Astrocyte of the cerebellum (primary cell): ENCODE measurements at regions of chr7 and their contacts with region 1.

Region 1: DNA sequence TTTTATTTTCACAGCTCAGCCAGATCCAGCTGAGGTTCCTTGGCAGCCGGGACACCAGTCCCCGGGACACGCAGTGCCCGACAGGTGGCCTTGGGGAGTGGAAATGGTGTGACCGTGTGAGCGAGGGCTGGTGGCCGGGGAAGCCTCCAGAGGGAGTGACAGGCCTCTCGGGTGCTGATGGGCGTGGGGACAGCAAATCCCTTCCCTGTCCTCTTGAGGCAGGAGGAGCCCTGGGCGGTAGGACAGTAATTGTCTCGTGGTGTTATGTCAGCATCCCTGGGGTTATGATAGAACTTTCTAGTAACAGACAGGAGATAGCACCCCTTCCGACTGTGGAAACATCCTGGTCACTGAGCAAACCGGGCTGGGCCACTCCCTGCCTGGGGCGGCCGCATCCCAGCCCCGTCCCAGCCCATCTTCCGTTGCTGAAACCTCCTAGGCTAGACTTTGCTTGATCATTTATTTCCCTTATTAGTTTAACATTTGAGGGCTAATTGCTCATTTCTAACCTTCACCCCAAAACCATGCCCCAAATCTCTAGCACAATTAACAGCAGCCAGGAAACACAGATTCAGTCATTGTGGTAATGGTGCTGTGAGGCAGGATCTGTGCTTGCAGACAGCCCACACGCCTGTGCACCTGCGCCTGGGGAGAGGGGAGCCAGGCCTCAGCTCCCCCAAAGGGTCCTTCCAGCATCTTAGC is 63.3 kb downstream of the ELFN1 start:
- DNase-seq: no peak
- H3K4me3 ChIP-seq: no peak overlapping the region
- CTCF ChIP-seq: no peak

Region 2: DNA sequence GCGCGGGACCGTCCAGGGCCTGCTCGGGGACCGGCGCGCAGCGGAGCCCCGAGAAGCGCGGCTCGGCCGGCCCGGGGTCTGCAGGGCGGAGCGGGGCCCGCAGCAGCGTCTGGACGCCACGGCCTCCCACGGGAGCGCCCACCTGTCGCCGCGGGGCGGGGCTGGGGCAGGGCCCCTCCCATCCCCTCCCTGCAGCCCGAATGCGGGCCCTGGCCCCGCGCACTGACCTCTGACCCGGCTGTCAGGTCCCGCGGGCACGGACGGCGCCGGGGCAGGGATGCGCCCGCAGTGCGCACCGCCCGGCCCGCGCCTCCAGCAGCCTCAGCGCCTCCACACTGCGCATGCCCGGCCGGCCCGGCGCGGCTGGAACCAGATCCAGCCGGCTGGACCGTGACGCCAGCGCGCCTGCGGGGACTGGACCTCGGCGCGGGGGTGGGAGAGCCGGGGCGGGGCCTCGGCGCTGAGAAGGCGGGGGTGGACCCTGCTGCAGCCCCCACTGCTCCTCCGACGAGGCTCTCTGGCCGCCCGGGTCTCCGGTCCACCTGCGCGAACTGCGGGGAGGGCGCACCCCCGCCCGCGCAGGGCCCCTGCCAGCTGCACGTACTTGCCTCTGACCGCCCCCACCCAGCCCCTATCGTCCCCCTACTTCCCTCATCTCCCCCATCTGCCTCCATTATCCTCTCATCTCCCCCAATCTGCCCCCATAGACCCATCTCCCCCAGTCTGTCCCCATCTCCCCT is 705.2 kb before region 1 on chr7:
- in situ Hi-C with region 1: no loop called
- DNase-seq: peak; percentile 49
- H3K4me3 ChIP-seq: peak overlapping the region; percentile 62
- CTCF ChIP-seq: no peak

Region 3: DNA sequence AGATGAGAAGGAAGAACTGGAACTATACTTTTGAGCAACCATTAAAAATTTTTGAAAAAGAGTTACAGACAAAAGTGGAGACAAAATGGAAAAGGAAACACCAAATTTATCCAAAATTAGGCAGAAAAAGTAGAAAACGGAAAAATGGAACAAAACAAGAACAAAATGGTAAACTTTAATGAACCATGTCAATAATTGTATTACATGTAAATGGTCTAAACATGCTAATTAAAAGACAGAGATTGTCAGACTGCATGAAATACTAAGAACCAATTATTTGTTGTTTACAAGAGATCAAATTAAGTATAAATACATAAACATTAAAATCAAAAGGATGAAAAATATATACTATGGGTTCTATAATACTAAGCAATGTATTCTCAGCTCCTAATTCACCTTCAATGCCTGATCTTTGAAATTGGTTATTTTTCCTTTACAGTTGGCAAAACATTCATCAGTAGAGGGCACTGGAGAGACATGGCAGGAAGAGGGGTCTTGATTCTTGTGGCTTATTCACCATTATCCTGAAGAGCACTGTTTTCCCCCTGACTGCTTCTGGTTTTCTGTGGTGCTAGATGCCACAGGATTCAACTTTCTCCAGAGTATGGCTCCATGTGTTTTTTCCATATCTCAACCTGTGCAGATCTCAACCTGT is 61.7 kb after region 1 on chr7:
- in situ Hi-C with region 1: loop called (anchors 5 kb)
- DNase-seq: no peak
- H3K4me3 ChIP-seq: no peak overlapping the region
- CTCF ChIP-seq: peak; percentile 11

Region 4: DNA sequence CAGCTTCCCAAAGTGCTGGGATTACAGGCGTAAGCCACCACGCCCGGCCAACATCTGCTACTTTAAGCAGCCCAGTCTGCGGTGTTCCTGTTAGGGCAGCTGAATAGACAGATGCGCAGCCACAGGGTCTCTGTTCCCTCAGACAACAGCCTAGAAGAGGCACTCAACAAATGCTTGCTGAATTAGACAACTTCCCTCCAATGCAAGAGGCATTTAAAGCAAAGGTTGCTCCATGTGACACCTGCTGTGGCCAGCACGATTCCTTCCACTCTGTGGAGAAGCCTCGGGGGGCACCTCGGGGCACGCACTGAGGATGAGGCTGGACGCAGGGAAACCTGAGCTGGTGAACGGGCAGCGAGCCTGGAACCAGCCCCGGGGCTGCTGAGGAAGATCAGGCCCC is 261.6 kb after region 1 on chr7:
- in situ Hi-C with region 1: no loop called
- DNase-seq: no peak
- H3K4me3 ChIP-seq: no peak overlapping the region
- CTCF ChIP-seq: no peak